ENCODE measurements at regions of chr10 and their contacts with region 1.

Region 1: GRCh38 chr10:28991326-28992270 is 297.3 kb upstream of the LYZL1 start:
- DNase-seq: peak; percentile 79
- H3K4me3 Mint-ChIP-seq: no peak overlapping the region
- H3K27ac Mint-ChIP-seq: peak overlapping the region; percentile 78
- H3K4me1 Mint-ChIP-seq: peaks cover 40% of the 10 kb centered on the region
- H3K27me3 Mint-ChIP-seq: no peaks in the 10 kb centered on the region
- CTCF ChIP-seq: peak; percentile 85

Region 2: DNA sequence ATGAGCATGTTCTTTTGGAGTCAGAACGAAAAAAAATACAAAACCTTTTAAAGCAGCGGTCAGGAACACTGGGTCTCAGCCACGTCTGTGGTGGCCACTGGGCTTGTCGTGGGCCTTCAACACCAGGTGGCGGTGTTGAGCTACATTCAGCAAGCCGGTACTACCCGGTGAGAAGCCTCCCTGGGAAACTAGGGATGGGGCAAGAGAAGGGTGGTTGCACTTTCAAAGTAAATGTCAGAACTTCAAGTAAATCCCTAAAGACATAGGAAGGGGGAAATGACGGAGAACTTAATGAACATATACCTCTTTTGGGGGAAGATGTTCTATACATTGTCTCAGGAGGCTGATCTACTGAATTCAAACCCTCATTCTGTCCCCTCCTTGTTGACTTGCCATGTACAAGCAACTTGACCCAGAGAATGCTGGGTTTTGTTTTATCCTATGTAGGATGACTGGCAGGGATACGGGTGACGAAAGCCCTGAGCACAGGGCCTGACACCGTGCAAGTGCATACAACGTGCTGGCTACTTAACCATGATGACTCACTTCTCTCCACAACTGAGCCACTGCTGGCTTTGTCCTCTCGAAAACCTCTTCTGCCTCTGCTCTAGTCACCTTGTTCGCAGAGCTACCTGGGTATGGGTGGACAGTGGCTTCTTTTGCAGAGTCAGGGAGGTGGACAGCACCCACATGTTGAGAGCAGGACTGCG is 363.3 kb before region 1 on chr10:
- CTCF ChIA-PET with region 1: no interaction called
- POLR2A ChIA-PET with region 1: no interaction called
- intact Hi-C with region 1: loop called (anchors 1 kb)
- DNase-seq: peak; percentile 84
- H3K4me3 Mint-ChIP-seq: no peak overlapping the region
- H3K27ac Mint-ChIP-seq: no peak overlapping the region
- H3K4me1 Mint-ChIP-seq: peaks cover 15% of the 10 kb centered on the region
- H3K27me3 Mint-ChIP-seq: no peaks in the 10 kb centered on the region
- CTCF ChIP-seq: peak; percentile 80

Region 3: DNA sequence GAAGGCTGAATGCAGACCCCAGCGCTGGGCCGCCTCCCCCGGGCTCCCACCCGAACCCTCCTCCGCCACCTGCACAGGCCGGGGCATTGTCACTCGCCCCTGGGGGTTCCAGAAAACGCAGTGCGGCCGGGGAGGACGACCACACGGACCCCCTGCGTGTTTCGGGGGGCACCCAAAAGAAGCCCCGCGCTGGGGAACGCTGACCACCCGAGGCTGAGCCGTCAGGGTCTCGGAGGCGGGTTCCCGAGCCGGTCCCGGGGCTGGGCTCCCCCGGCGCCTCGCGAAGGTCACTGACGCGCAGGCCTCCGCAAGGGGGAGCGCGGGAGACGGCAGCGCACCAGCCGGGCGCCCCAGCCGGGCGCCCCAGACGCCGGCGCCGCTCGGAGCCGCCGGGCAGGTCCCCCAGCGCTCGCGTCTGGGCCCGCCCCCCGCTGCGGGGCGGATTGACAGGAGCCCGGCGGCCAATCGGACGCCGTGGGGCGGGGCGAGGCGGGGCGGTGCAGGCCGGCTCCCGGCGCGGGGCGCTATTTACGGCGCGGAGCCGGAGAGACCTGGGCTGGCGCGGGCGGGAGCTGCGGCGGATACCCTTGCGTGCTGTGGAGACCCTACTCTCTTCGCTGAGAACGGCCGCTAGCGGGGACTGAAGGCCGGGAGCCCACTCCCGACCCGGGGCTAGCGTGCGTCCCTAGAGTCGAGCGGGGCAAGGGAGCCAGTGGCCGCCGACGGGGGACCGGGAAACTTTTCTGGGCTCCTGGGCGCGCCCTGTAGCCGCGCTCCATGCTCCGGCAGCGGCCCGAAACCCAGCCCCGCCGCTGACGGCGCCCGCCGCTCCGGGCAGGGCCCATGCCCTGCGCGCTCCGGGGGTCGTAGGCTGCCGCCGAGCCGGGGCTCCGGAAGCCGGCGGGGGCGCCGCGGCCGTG is 314.4 kb before region 1 on chr10 and contains the start of gene BAMBI:
- CTCF ChIA-PET with region 1: interaction called, 17 read pairs
- POLR2A ChIA-PET with region 1: interaction called, 13 read pairs
- intact Hi-C with region 1: loop called (anchors 1 kb)
- DNase-seq: peak; percentile 91
- H3K4me3 Mint-ChIP-seq: peak within 1 kb of the TSS; percentile 91
- H3K27ac Mint-ChIP-seq: peak within 1 kb of the TSS; percentile 57
- H3K4me1 Mint-ChIP-seq: peaks cover 7% of the 10 kb centered on the region
- H3K27me3 Mint-ChIP-seq: peaks cover 12% of the 10 kb centered on the region
- CTCF ChIP-seq: peak; percentile 49
- total RNA-seq, gene BAMBI: 21.2 and 31.6 TPM in 2 replicates

Region 4: DNA sequence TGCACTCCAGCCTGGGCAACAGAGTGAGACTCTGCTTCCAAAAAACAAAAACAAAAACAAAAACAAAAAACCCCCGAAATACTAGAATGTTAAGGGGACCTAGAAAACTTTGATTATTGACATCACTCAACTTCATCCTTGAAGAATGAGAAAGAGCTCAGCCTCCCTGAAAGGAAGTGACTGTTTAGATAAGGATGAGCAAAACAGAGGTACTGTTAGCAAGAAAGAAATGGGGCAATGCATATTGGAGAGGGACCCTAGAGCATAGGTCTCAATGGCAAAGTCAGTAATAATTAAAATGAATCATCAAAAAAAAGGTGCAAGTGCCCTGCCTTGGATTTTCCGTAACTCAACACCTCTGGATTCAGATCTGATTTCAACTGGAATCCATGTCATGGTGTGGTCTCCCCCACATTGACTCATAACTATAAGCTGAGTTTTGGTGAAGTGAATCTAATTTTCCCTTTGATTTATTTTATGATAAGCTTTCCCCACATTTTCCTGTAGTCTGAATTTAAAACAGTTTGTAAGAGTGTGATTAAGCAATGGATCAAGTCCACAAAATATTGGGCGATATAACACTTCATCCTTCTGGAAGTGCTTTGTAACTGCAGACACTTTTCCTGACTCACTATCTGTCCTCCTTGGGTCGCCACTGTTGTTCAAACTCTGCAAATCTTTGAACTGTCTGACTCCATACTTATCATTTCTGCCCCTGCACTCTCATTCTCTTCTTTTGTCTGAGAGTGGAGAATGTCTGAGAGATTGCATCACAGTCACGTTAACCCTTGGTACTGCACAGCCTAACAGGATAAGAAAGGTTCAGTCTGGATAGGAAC is 72.4 kb after region 1 on chr10:
- CTCF ChIA-PET with region 1: no interaction called
- POLR2A ChIA-PET with region 1: no interaction called
- intact Hi-C with region 1: loop called (anchors 5 kb)
- DNase-seq: peak; percentile 61
- H3K4me3 Mint-ChIP-seq: peak overlapping the region; percentile 53
- H3K27ac Mint-ChIP-seq: peak overlapping the region; percentile 44
- H3K4me1 Mint-ChIP-seq: peaks cover 29% of the 10 kb centered on the region
- H3K27me3 Mint-ChIP-seq: no peaks in the 10 kb centered on the region
- CTCF ChIP-seq: no peak

Region 5: GRCh38 chr10:29304264-29305030 is 312.8 kb after region 1 on chr10:
- CTCF ChIA-PET with region 1: interaction called, 5 read pairs
- POLR2A ChIA-PET with region 1: no interaction called
- intact Hi-C with region 1: loop called (anchors 2 kb)
- DNase-seq: peak; percentile 78
- H3K4me3 Mint-ChIP-seq: no peak overlapping the region
- H3K27ac Mint-ChIP-seq: no peak overlapping the region
- H3K4me1 Mint-ChIP-seq: no peaks in the 10 kb centered on the region
- H3K27me3 Mint-ChIP-seq: peaks cover 12% of the 10 kb centered on the region
- CTCF ChIP-seq: peak; percentile 83